AG04449 (cell line): ENCODE measurements at regions of chr3 and their contacts with region 1.

Region 1: DNA sequence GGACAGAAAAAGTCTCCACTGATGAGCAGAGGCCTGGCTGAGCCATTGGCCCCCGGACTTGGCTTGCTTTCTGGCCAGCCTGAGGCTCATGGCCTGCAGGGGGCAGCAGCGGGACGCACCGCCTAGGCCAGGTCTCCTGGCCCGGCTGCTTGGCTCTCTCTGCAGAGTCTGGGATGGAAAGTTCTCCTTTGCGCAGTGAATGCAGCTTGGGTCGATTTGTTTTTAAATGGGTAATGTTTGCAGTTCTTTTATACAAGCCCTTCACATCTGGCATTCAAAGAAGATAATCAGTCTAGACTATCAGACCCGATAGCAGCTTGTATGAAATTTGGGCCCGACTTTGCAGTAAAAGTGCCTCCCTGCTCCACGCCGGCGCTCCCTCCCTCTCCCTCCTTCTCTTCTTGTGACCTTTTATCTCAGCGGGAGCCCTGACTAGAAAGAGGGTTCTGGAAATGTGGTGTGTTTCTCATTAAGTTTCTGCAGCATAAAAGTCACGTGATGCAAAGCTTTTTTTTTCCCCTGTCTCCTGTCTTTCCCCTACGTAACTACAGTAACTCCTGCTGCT is 59.9 kb downstream of the ZNF621 start:
- DNase-seq: peak; percentile 23
- H3K4me3 ChIP-seq: no peak overlapping the region; the same call in 1 of the 2 replicates
- CTCF ChIP-seq: peak; percentile 99

Region 2: DNA sequence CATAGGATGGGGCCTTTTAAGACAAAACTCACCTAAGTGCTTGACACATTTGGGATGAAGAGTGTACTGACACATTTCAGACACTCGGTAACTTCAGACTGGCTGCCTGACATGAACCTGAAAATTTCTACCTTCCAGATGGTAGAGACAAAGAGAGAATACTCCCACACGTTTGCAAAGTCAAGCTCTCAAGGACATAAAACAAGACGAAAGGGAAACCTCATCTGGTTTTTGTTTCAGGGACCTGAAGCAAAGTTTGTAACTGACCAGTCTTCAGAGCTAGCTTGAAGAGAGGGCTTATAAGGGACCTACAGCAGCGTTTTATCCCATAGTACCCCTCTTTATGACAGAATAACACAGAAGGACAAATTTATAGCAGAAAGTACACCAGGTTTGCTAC is 18.0 kb before region 1 on chr3:
- CTCF ChIA-PET with region 1: interaction called, 19 read pairs
- POLR2A ChIA-PET with region 1: no interaction called
- DNase-seq: no peak
- H3K4me3 ChIP-seq: no peak overlapping the region
- CTCF ChIP-seq: no peak

Region 3: GRCh38 chr3:40602778-40603385 is 18.2 kb after region 1 on chr3:
- CTCF ChIA-PET with region 1: interaction called, 12 read pairs
- POLR2A ChIA-PET with region 1: no interaction called
- DNase-seq: no peak
- H3K4me3 ChIP-seq: no peak overlapping the region
- CTCF ChIP-seq: no peak

Region 4: DNA sequence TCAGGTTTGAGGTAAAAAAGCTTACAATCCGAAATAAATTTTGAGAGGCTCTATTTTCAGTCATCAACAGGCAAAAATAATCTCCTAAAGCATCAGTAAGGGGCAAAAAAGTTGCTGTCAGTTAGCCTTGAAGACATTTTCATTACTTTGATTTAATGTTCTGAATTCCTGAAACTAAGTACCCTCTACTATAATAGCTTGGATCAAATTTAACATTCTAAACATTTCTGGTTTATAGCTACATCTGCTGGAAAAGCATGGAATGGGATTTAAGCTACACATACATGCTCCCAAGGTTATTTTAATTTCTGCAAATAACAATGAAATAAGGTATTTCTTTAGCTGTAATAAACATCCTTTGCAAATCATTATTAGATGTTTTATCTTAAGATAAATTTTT is 1131.8 kb after region 1 on chr3:
- CTCF ChIA-PET with region 1: interaction called, 18 read pairs
- POLR2A ChIA-PET with region 1: no interaction called
- DNase-seq: no peak
- H3K4me3 ChIP-seq: no peak overlapping the region
- CTCF ChIP-seq: peak; percentile 50